ENCODE measurements at regions of chr19 and their contacts with region 1.

Region 1: GRCh38 chr19:2475702-2476450 is at the start of gene GADD45B:
- DNase-seq: peak; percentile 97 to 98
- ATAC-seq: peak; percentile 74
- total RNA-seq, gene GADD45B: 44.4 to 53.8 TPM

Region 2: DNA sequence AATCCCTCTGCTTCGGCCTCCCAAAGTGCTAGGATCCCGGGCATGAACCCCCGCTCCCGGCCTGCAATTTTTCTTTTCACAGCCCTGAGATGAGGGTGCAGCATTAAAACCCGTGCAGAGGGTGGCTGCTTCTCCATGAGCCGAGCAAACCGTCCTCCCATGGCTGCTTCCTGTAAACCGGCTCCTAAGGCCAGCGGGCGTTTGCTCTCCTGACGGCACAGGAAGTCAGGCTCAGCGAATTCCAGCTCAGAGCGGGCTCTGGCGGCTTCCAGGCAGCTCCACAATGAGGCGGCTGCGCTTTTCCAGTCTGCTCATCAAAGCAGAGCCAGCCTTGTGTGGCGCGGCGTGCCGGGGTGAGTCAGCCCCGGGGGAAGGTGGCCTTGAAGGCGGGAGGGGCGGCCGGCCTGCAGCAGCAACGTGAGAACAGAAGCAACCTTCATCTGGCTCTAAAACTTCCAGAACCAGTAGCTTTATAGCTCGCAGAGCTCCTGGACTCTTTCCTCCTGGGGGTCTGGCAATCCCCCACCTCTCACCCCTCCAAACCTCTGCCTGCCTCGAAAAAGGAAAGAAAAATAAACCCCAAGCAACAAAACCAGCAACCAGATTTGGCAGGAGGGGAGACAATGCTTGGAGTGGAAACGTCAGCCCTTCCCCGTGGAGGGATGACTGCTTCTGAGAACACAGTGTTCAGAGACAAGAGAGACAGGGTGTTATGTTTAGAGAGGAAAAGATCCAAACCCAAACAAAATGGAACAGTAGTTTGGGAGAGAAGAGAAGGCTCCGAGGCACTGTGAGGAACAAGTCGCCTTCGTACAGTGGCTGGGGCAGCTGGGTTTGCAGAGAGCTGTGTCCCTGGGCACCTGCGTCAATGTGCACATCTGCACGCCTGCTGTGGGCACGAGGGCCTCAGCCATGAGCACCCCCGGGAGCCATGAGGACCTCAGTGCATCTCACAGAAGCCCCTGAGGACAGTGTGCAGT is 67.9 kb after region 1 on chr19:
- intact Hi-C with region 1: loop called in 1 of 2 experiments (anchors 5 kb)
- DNase-seq: peak; percentile 88 to 94
- ATAC-seq: peak; percentile 91

Region 3: DNA sequence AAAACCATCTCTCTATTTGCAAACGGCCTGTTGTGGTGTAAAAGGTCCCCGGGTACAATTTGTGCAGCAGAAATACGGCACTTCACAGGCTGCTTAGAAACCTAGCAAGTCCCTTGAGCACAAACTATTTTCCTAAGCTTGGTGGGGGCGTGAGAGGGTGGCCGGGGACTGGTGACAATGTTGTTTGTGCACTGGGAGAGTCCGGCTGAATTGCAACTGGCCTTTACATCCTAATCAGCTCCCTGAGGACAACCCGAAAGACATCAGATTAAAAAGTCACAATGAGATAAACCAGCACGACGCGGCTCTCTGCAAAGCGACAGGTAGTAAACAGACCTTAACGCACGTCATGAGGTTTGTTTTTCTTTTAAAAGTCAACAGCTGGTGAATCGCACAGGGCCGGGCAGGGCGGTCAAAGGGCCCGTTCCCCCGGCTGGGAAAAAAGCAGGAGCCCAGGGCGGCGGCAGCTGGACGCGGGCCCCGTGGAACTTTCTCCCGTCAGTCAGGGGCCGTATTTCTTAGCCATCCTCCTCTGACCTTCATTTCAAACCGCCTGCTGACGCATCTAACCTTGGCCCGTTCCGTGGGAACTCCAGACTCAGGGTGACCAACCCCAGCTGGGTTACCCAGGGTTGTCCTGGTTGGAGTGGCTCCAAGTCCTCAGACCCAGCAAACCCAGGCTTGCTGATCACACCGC is 112.4 kb after region 1 on chr19:
- intact Hi-C with region 1: loop called in 1 of 2 experiments (anchors 10 kb)
- DNase-seq: peak in 1 of 2 donors; percentile 67
- ATAC-seq: peak; percentile 90

Region 4: DNA sequence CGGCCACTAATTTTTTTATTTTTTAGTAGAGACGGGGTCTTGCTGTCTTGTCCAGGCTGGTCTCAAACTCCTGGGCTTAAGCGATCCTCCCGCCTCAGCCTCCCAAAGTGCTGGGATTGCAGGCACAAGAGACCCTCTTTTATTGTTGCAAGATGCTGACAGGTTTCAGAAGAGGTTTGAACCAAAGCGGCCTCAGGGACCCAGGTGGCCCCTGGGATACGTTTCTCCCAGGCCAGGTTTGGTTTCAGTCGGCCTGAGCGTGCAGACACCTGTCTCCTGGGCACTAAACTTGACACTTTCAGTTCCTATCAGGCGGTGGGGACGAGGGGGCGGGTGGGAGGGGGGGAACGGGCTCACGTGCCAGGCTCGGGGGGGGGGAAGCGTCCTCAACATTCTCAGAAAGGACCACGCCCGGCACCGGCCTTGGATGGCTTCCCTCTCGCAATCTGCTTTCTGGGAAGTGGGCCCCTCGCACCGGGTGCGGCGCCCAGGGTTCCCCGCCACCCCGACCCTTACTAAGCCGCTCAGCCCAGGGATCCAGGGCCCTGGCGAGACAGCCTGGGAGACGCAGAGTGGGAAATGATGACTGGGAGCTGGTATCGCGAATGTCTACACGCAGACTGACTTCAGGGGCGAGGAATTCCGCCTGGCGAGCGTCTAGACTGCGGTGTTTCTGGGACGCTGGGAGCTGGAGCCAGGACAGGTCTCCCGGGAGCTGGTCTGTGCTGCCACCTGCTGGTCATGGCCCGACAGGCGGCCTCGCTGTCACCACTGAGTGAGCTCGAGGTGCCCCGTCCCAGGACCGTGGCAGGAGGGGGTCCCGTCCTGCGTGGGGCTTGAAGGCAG is 135.0 kb after region 1 on chr19:
- intact Hi-C with region 1: loop called in 1 of 2 experiments (anchors 2 kb)
- DNase-seq: peak; percentile 89 to 97
- ATAC-seq: peak; percentile 95

Measured in left colon (tissue), 2 donors.